H1 (cell line): ENCODE measurements at regions of chr12 and their contacts with region 1.

Region 1: DNA sequence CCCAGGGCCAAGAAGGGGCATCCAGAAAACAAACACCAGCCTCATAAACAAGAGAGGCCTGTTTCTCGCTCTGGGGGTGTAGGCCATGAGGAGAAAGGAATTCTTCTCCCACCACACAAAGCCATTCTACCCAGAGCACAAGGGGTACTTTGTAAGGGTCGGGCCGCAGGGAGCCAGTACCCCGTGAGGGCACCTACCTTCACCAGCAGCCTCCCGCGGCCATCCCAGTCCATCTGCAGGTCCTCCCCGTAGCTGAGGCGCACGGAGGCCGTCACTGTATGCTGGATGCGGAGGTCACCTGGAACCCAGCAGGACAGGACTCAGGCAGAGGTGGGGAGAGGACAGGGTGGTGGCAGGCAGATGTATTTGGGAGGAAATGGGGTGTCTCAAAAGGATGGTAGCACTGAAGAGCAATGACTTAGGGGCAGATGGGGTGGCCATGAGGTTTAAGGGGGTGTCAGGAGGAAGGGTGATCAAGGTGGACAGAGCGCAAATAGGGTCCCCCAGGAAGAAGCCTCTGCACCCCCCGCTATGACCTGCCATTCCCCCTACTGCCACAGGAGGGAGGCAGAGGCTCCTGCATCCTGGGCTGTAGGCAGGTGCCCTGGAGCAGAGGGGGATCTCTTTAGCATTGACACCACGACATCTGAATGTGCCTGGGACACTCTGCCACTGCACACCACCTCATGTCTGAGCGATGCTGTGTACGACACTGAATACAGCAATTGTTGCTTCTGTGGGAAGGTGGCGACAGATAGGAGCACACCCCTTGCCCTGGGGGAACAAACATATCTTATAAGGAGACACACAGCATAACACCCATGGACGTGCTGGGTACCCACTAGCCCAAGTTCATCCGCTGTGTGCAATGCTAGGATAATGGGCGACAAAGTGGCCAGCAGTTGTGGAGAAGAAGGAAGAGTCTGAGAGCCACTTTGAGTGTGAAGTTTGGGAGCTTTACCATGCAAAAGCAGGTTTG is 61.4 kb downstream of the VWF start:
- DNase-seq: peak in 1 of 2 experiments; percentile 90
- H3K4me3 ChIP-seq: no peak overlapping the region
- H3K27ac ChIP-seq: no peak overlapping the region
- H3K4me1 ChIP-seq: peaks cover 7 to 9% (median 7%) of the 10 kb centered on the region in 4 experiments
- H3K27me3 ChIP-seq: peaks cover 0 to 3% (median 0%) of the 10 kb centered on the region in 4 experiments; a peak in 1 of 7 replicates
- CTCF ChIP-seq: peak; percentile 92 to 99 (median 98)
- EP300 ChIP-seq: no peak
- POLR2A ChIP-seq: no peak
- RAD21 ChIP-seq: peak; percentile 97

Region 2: GRCh38 chr12:6084261-6084968 is 21.4 kb after region 1 on chr12:
- CTCF ChIA-PET with region 1: interaction called, 10 read pairs
- POLR2A ChIA-PET with region 1: interaction called, 4 read pairs
- DNase-seq: peak in 1 of 2 experiments; percentile 56
- H3K4me3 ChIP-seq: peak overlapping the region in 3 of 4 experiments; percentile 8 to 27 (median 14); a peak in 3 of 8 replicates
- H3K27ac ChIP-seq: peak overlapping the region; percentile 66
- H3K4me1 ChIP-seq: peaks cover 10 to 19% (median 15%) of the 10 kb centered on the region in 4 experiments
- H3K27me3 ChIP-seq: no peaks in the 10 kb centered on the region
- CTCF ChIP-seq: no peak
- EP300 ChIP-seq: no peak
- POLR2A ChIP-seq: no peak
- RAD21 ChIP-seq: no peak; a peak in 1 of 4 replicates

Region 3: GRCh38 chr12:6147756-6148460 is 84.9 kb after region 1 on chr12:
- CTCF ChIA-PET with region 1: no interaction called
- POLR2A ChIA-PET with region 1: no interaction called
- DNase-seq: no peak
- H3K4me3 ChIP-seq: no peak overlapping the region
- H3K27ac ChIP-seq: no peak overlapping the region
- H3K4me1 ChIP-seq: no peaks in the 10 kb centered on the region
- H3K27me3 ChIP-seq: no peaks in the 10 kb centered on the region
- CTCF ChIP-seq: no peak
- EP300 ChIP-seq: no peak
- POLR2A ChIP-seq: no peak
- RAD21 ChIP-seq: no peak

Region 4: DNA sequence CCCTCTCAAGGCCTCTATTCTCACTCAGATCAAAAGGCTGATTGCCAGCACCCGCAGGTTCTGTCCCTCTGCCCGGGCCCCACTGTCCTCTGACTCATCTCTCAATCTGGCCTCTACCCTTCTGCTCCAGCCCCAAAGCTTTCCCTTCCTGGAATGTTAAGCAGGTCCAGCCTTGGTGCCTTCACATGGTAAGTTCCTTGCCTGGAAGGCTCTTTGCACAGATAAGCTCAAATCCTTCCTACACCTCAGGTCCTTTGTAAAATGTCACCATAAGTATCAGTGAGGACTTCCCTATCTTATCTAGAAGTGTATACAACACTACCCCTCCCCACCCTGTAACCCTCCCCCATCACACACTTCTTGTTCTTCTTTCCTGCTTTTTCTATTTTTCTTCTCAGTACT is 933.0 kb after region 1 on chr12:
- CTCF ChIA-PET with region 1: no interaction called
- POLR2A ChIA-PET with region 1: no interaction called
- DNase-seq: no peak
- H3K4me3 ChIP-seq: no peak overlapping the region
- H3K27ac ChIP-seq: no peak overlapping the region
- H3K4me1 ChIP-seq: no peaks in the 10 kb centered on the region
- H3K27me3 ChIP-seq: no peaks in the 10 kb centered on the region
- CTCF ChIP-seq: no peak
- EP300 ChIP-seq: no peak
- POLR2A ChIP-seq: no peak
- RAD21 ChIP-seq: no peak